HepG2 (cell line): ENCODE measurements at regions of chr21 and their contacts with region 1.

Region 1: GRCh38 chr21:46323227-46324128 is at the start of gene C21orf58:
- DNase-seq: peak; percentile 92
- ATAC-seq: peak; percentile 84
- H3K4me3 ChIP-seq: peak within 1 kb of the TSS; percentile 95 to 98 (median 97)
- H3K27ac ChIP-seq: peak within 1 kb of the TSS; percentile 99
- H3K4me1 ChIP-seq: peaks cover 47% of the 10 kb centered on the region
- H3K27me3 ChIP-seq: no peaks in the 10 kb centered on the region; a peak in 1 of 5 replicates
- CTCF ChIP-seq: no peak
- EP300 ChIP-seq: no peak
- POLR2A ChIP-seq: peak in 1 of 2 experiments; percentile 73; a peak in 2 of 4 replicates
- RAD21 ChIP-seq: no peak
- total RNA-seq, gene C21orf58: 3.3 and 6.8 TPM in 2 replicates

Region 2: GRCh38 chr21:46144464-46145070 is 178.9 kb before region 1 on chr21:
- CTCF ChIA-PET with region 1: interaction called, 5 read pairs
- POLR2A ChIA-PET with region 1: no interaction called
- in situ Hi-C with region 1: no loop called
- intact Hi-C with region 1: loop called (anchors 5 kb)
- DNase-seq: no peak
- ATAC-seq: no peak
- H3K4me3 ChIP-seq: no peak overlapping the region
- H3K27ac ChIP-seq: no peak overlapping the region
- H3K4me1 ChIP-seq: peaks cover 33% of the 10 kb centered on the region
- H3K27me3 ChIP-seq: no peaks in the 10 kb centered on the region
- CTCF ChIP-seq: no peak
- EP300 ChIP-seq: no peak
- POLR2A ChIP-seq: no peak
- RAD21 ChIP-seq: no peak

Region 3: GRCh38 chr21:46228345-46229051 is 95.0 kb before region 1 on chr21 and contains the start of gene LSS:
- CTCF ChIA-PET with region 1: no interaction called
- POLR2A ChIA-PET with region 1: no interaction called
- in situ Hi-C with region 1: no loop called
- intact Hi-C with region 1: loop called (anchors 2 kb)
- DNase-seq: peak; percentile 95
- ATAC-seq: peak; percentile 88
- H3K4me3 ChIP-seq: peak within 1 kb of the TSS; percentile 91 to 99 (median 98)
- H3K27ac ChIP-seq: peak within 1 kb of the TSS; percentile 78
- H3K4me1 ChIP-seq: peaks cover 61% of the 10 kb centered on the region
- H3K27me3 ChIP-seq: no peaks in the 10 kb centered on the region
- CTCF ChIP-seq: no peak
- EP300 ChIP-seq: no peak
- POLR2A ChIP-seq: peak in 1 of 2 experiments; percentile 46; a peak in 2 of 4 replicates
- RAD21 ChIP-seq: 0 out of 2 replicates have a peak, but pooled peaks have one; percentile 9
- total RNA-seq, gene LSS: 73.5 and 113 TPM in 2 replicates

Region 4: DNA sequence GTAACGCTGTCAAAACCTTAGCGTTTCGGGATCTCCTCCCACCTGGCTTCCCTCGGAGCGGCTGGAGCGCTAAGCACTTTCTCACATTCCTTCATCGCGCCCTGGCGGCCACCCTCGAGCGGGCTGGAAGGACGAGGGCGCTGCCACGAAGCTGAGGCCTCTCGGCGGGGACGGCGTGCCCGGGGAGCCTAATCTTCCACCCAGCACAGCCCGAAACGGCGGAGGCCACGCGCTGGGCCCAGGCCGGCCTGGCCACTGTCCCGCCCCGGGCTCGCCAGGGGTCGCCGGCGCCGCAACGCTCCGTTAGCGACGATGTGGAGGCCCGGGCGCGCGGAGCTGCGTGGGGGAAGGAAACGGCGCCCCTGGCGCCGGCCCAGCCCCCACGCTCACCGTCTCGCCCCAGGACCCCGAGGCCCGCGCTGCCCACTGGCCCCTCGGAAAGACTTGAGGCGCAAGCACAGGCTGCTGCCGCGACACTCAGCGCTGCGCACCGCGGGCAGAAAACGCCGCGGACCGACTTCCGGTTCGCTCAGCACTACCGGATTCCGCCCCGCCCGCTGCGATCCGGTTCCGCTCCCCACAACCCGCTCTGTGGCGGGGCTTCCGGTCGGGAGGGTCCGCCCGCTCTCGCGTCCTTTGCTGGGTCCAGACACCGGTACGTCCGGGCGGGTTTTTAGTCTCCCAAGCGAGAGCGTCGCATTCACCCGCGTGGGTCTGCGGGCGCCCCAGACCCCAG is 37.5 kb before region 1 on chr21 and contains the start of gene YBEY:
- CTCF ChIA-PET with region 1: no interaction called
- POLR2A ChIA-PET with region 1: no interaction called
- in situ Hi-C with region 1: loop called (anchors 5 kb)
- intact Hi-C with region 1: loop called (anchors 1 kb)
- DNase-seq: peak; percentile 82
- ATAC-seq: peak; percentile 98
- H3K4me3 ChIP-seq: peak within 1 kb of the TSS; percentile 84 to 98 (median 89)
- H3K27ac ChIP-seq: peak within 1 kb of the TSS; percentile 95
- H3K4me1 ChIP-seq: peaks cover 63% of the 10 kb centered on the region
- H3K27me3 ChIP-seq: no peaks in the 10 kb centered on the region; a peak in 1 of 5 replicates
- CTCF ChIP-seq: peak; percentile 62
- EP300 ChIP-seq: no peak
- POLR2A ChIP-seq: peak; percentile 75 to 80
- RAD21 ChIP-seq: peak; percentile 52; the same call in 1 of the 2 replicates
- total RNA-seq, gene YBEY: 6.5 and 8.9 TPM in 2 replicates

Region 5: GRCh38 chr21:46304955-46305354 is 18.5 kb before region 1 on chr21:
- CTCF ChIA-PET with region 1: no interaction called
- POLR2A ChIA-PET with region 1: no interaction called
- in situ Hi-C with region 1: no loop called
- intact Hi-C with region 1: no loop called
- DNase-seq: no peak
- ATAC-seq: no peak
- H3K4me3 ChIP-seq: no peak overlapping the region
- H3K27ac ChIP-seq: no peak overlapping the region
- H3K4me1 ChIP-seq: no peaks in the 10 kb centered on the region
- H3K27me3 ChIP-seq: no peaks in the 10 kb centered on the region
- CTCF ChIP-seq: no peak
- EP300 ChIP-seq: no peak
- POLR2A ChIP-seq: no peak
- RAD21 ChIP-seq: no peak

Region 6: DNA sequence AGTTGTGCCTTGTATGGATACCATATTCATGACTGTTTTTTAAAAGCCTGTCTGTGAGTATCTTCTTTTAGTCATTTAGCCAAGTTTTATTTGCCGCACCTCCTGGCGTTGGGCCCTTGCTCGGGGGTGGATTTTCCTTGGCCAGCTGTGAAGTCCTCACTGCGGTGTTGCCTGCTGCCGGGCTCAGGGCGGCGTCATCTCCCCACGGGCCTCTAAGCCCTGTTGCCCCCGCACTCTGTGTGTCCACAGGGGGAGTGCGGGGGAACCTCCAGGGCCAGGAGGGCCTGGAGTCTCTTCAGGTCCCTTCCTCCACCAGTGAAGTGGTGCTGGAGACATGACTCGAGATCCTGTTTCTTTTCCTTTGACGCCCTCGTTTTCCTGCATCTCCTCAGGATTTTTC is 69.4 kb after region 1 on chr21:
- CTCF ChIA-PET with region 1: no interaction called
- POLR2A ChIA-PET with region 1: no interaction called
- in situ Hi-C with region 1: no loop called
- intact Hi-C with region 1: no loop called
- DNase-seq: no peak
- ATAC-seq: no peak
- H3K4me3 ChIP-seq: no peak overlapping the region
- H3K27ac ChIP-seq: peak overlapping the region; percentile 71
- H3K4me1 ChIP-seq: peaks cover 20% of the 10 kb centered on the region
- H3K27me3 ChIP-seq: no peaks in the 10 kb centered on the region
- CTCF ChIP-seq: no peak
- EP300 ChIP-seq: no peak
- POLR2A ChIP-seq: no peak
- RAD21 ChIP-seq: no peak

Region 7: GRCh38 chr21:46517361-46517760 is 193.9 kb after region 1 on chr21:
- CTCF ChIA-PET with region 1: no interaction called
- POLR2A ChIA-PET with region 1: no interaction called
- in situ Hi-C with region 1: no loop called
- intact Hi-C with region 1: no loop called
- DNase-seq: no peak
- ATAC-seq: no peak
- H3K4me3 ChIP-seq: no peak overlapping the region
- H3K27ac ChIP-seq: no peak overlapping the region
- H3K4me1 ChIP-seq: no peaks in the 10 kb centered on the region
- H3K27me3 ChIP-seq: no peaks in the 10 kb centered on the region
- CTCF ChIP-seq: no peak
- EP300 ChIP-seq: no peak
- POLR2A ChIP-seq: no peak
- RAD21 ChIP-seq: no peak